Right ventricle myocardium superior (tissue), 1 donor: ENCODE measurements at regions of chr1 and their contacts with region 1.

Region 1: GRCh38 chr1:20142001-20142710 is 3.0 kb downstream of the PLA2G2F start:
- DNase-seq: no peak
- ATAC-seq: no peak

Region 2: DNA sequence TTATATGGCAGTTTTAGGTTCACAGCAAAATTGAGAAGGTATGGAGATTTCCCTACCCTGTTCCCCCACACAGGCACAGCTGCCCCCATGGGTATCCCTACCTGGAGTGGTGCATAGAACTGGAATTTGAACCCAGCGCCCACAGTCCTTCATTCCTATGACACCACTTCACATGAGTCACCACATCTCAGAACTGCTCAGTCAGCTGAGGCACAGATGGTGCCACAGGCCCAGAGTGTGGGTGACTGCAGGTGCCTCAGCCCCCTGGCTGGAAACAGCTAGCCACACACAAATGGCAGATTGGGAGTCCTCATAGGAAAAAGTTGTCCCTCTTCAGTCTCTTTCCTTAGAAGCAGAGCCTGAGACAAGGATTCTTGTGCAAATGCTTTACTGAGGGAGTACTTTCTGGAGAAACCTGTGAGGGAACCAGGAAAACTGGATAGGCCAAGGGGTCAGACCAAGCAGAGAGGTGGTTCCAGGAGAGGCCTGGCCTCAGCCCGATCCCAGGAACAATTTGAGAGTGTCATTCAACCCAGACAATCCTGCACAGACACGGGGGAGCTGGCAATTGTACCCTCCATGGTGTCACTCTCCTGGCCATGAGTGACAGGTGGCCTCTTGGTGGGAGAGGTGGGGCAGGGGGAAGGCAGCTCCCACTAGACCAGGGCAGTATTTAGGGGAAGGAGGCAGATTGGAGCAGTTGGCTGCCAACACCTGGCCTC is 29.7 kb before region 1 on chr1:
- intact Hi-C with region 1: loop called (anchors 2 kb)
- DNase-seq: no peak
- ATAC-seq: no peak